Pancreas (tissue), 10 donors: ENCODE measurements at regions of chr5 and their contacts with region 1.

Region 1: DNA sequence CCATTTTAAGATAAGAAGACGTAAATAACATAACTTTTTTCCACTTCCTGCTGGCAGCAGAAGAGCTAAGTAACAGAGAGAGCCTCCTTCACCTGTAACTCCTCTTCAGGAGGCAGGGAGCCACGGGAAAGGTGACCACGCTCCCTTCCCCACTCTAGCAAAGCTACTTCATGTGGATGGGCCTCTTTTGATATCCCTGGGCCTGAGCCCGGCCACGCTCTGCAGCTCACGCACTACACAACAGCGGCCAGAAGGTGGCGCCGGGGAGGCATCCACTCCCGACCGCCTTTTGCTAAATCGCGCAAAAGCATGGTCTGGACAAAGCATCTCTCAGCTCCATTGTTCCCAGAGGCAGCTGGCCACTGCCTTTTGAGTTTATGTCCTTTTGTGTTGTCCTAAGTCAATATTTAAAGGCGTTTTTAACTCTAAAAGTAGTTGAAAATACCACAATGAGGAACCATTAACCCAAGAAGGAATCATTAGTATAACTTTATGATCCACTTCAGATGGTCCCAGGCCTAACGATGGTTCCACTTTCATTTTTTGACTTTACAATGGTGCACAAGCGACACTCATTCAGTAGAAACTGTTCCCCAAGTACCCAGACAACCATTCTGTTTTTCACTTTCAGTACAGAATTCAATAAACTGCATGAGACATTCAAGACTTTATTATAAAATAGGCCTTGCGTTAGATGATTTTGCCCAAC is 23.6 kb downstream of the CMBL start:
- DNase-seq: peak; percentile 72 to 94 (median 88)
- ATAC-seq: peak; percentile 75 to 92 (median 84)
- H3K4me3 ChIP-seq: no peak overlapping the region
- H3K27ac ChIP-seq: no peak overlapping the region
- H3K4me1 ChIP-seq: peaks cover 0 to 10% (median 8%) of the 10 kb centered on the region in 3 donors
- H3K27me3 ChIP-seq: no peaks in the 10 kb centered on the region
- CTCF ChIP-seq: peak; percentile 70 to 93 (median 87)

Region 2: DNA sequence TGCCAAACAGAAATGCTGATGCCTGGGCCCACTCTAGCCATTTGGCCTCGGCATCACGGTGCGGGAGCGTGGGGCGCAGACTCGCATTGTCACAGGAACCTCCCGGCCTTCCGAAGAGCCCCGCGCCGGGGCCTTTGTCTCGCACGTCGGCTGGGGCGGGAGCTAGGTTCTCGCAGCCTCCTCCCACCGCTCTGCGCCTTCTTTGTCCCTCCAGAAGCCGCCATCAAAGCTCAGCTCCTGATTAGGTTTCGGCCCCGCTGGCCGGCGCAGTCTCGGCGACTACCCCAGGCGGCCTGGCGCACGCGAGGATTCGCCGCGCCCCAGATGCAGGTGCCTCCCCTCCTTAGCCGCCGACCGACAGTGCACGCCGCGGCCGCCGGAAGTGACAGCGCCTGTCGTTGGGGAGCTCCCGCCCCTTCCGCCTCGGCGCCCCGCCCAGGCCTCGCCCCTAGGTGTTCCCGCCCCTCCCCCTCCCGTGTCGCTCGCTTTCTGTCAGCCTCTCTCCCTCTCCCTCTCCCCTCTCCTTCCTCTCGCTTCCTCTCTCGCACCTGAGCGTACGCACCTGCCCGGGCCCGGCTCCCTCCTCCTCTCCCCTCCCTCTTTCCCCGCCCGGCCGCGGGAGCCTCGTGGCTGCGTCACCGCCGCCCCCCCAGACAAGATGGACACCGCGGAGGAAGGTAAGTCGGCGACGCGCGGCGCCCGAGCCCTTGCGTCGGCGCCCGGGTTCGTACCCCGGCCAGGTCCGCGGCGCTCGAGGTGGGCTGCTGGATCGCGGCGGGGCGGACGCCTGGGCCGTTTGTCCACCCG is 69.4 kb after region 1 on chr5 and contains the start of gene MARCHF6:
- intact Hi-C with region 1: no loop called
- DNase-seq: peak; percentile 96 to 99 (median 98)
- ATAC-seq: peak; percentile 92 to 97 (median 93)
- H3K4me3 ChIP-seq: peak within 1 kb of the TSS; percentile 62 to 98 (median 94)
- H3K27ac ChIP-seq: peak within 1 kb of the TSS; percentile 92 to 100 (median 98)
- H3K4me1 ChIP-seq: peaks cover 5 to 29% (median 15%) of the 10 kb centered on the region in 3 donors
- H3K27me3 ChIP-seq: no peaks in the 10 kb centered on the region
- CTCF ChIP-seq: no peak
- total RNA-seq, gene MARCHF6: 72.4 to 105 (median 83.3) TPM

Region 3: GRCh38 chr5:10364186-10364683 is 80.2 kb after region 1 on chr5:
- intact Hi-C with region 1: loop called in 1 of 3 experiments (anchors 10 kb)
- DNase-seq: no peak
- ATAC-seq: peak; percentile 26 to 65 (median 58)
- H3K4me3 ChIP-seq: no peak overlapping the region
- H3K27ac ChIP-seq: no peak overlapping the region
- H3K4me1 ChIP-seq: peaks cover 13 to 30% (median 22%) of the 10 kb centered on the region in 3 donors
- H3K27me3 ChIP-seq: no peaks in the 10 kb centered on the region
- CTCF ChIP-seq: peak in 1 of 4 donors; percentile 23

Region 4: GRCh38 chr5:10424124-10424731 is 140.1 kb after region 1 on chr5:
- intact Hi-C with region 1: loop called in 2 of 3 experiments (anchors 10 kb)
- DNase-seq: no peak
- ATAC-seq: peak in 3 of 4 donors; percentile 66 to 77 (median 68)
- H3K4me3 ChIP-seq: no peak overlapping the region
- H3K27ac ChIP-seq: no peak overlapping the region
- H3K4me1 ChIP-seq: no peaks in the 10 kb centered on the region
- H3K27me3 ChIP-seq: no peaks in the 10 kb centered on the region
- CTCF ChIP-seq: peak in 2 of 4 donors; percentile 18 to 19

Region 5: GRCh38 chr5:10632110-10632761 is 348.2 kb after region 1 on chr5:
- intact Hi-C with region 1: loop called in 1 of 3 experiments (anchors 5 kb)
- DNase-seq: peak in 1 of 6 donors; percentile 24
- ATAC-seq: peak in 1 of 4 donors; percentile 7
- H3K4me3 ChIP-seq: no peak overlapping the region
- H3K27ac ChIP-seq: no peak overlapping the region
- H3K4me1 ChIP-seq: peaks cover 0 to 4% (median 0%) of the 10 kb centered on the region in 3 donors
- H3K27me3 ChIP-seq: no peaks in the 10 kb centered on the region
- CTCF ChIP-seq: no peak